PC-3 (cell line): ENCODE measurements at regions of chr12 and their contacts with region 1.

Region 1: DNA sequence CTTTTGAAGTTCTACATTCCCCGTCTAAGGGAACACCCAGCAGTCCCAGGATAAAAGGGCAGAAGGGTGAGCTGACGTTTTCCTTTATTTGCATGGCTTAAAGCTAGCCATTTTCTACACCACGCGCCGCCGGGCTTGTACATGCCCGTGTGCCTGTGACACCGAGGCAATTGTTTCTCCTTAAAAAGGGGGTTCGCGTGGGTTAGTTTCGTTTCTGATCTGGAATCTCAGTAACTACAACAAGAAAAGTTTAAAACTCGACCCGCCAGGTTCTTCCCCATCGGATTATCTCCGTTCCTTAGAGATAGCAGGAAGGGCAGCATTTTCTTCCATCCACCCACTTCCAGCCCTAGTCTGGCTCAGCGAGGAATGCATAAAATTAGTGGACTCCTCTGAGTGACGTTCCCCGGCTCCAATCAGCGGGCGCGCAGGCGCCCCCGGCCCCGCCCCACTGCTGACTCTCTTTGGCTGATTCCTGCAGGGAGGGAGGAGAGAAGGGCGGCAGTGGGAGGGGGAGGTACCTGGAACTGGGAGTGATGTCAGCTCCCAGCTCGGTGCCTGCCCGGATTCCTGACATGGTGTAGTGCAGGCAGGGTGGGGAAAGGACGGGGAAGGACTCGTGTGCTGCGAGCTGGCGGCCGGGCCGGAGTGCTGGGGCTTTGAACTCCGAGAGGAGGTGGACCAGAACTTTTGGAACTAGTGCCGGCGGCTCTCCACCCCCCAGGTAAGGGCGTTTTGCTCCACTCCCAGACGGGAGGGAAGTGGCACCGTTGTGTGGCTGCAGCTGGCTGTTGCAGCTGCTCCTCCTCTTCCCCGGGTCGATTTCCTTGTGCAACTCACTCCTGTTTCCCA is at the start of gene PPFIBP1:
- DNase-seq: peak; percentile 100
- ATAC-seq: peak; percentile 91
- H3K4me3 ChIP-seq: peak within 1 kb of the TSS; percentile 80
- H3K27ac ChIP-seq: peak within 1 kb of the TSS; percentile 72
- H3K4me1 ChIP-seq: peaks cover 17% of the 10 kb centered on the region
- H3K27me3 ChIP-seq: no peaks in the 10 kb centered on the region
- CTCF ChIP-seq: peak; percentile 39
- total RNA-seq, gene PPFIBP1: 56.9 and 57.2 TPM in 2 replicates

Region 2: DNA sequence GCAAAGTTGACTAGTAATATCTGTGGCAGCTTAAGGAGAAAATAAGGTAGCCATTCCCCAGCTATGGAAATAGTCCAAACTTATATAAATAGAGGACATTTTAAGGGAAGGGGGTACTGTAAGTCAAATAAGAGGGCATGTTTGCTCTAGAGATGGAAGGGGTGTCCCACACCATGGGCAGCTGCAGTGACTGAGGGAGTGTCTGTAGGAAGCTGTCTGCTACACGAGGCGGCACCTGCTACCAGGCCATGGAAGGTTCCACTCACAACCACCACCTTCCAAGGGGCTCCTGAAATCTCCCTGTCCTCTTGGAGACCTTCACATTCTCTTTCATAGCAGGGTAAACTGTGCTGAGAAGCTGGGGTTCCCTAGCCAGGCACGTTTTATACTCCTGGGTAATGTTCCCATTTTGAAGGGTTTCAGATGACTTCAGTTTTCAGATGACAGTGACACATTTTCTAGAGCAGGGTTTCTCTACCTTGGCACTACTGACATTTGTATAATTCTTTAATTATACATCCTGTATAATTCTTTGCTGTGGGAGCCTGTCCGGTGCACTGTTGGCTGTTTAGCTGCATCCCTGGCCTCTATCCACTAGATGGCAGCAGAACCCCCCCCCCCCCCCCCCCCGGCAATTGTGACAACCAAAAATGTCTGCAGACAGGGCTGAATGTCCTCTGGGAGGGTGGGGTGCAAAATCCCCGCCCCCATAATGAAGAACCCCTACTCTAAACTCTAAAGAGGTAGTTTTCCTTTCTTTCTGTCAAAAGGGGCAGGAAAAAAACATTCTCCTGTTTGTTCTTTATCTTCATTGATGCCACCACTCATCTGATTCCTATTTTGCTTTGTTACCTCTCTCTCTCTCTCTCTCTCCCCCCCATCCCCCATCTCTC is 88.9 kb before region 1 on chr12:
- CTCF ChIA-PET with region 1: interaction called, 5 read pairs
- POLR2A ChIA-PET with region 1: no interaction called
- intact Hi-C with region 1: loop called (anchors 1 kb)
- DNase-seq: peak; percentile 33
- ATAC-seq: peak; percentile 82
- H3K4me3 ChIP-seq: no peak overlapping the region
- H3K27ac ChIP-seq: no peak overlapping the region
- H3K4me1 ChIP-seq: no peaks in the 10 kb centered on the region
- H3K27me3 ChIP-seq: no peaks in the 10 kb centered on the region
- CTCF ChIP-seq: peak; percentile 72

Region 3: DNA sequence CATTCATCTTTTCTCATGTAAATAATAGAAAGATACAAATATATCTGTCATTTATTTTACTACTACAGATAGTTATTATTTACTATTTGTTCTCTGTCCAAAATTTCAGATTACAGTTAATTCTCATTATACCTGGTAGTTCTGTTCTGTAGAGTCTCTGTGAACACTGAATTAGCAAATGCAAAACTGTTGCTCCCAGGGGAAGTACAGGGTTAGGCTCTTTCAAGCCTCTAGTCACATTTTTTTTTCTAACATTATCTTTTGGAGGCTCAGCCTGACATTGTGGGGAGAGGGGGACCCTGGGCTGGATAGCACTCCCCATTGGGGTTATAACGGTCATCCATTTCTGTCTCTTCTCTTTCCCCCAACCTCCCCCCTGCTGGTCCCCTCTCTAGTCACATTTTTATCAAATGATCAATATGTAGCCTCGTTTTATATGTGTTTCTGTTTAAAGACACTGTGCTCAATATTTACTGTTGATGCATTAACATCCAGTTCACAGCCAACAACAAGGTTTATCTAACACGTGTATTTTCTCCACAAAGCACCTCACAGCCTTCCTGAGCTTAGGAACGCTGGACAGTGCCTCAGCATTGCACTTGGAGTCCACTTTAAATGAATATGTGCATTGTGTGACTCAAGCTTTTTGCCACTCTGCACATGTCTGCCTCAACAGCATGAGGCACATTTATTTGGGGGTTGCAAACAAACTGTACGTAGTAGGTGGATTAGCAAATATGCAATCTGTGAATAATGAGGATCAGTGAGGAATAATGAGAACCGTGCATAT is 72.6 kb before region 1 on chr12:
- CTCF ChIA-PET with region 1: no interaction called
- POLR2A ChIA-PET with region 1: no interaction called
- intact Hi-C with region 1: no loop called
- DNase-seq: no peak
- ATAC-seq: no peak
- H3K4me3 ChIP-seq: no peak overlapping the region
- H3K27ac ChIP-seq: no peak overlapping the region
- H3K4me1 ChIP-seq: no peaks in the 10 kb centered on the region
- H3K27me3 ChIP-seq: no peaks in the 10 kb centered on the region
- CTCF ChIP-seq: no peak

Region 4: DNA sequence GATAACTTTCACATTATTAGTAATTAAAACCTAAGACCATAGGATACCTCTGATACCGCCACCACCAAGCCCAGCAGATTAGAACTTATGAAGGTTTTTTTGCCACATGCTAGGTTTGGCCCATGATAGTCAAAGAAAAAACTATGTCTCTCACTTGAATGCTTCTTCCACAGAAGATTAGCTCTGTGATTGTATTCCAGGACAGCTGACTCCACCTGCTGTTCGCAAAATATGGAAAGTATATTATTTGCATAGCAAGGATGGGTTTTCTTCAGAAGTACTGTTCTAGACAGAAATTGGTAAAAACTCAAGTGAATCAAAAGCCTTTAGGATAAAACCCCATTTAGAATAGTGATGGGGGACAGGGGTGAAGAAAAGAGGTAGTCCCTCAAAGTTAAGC is 42.3 kb after region 1 on chr12:
- CTCF ChIA-PET with region 1: interaction called, 11 read pairs
- POLR2A ChIA-PET with region 1: no interaction called
- intact Hi-C with region 1: loop called (anchors 2 kb)
- DNase-seq: peak; percentile 27
- ATAC-seq: peak; percentile 41
- H3K4me3 ChIP-seq: no peak overlapping the region
- H3K27ac ChIP-seq: no peak overlapping the region
- H3K4me1 ChIP-seq: peaks cover 13% of the 10 kb centered on the region
- H3K27me3 ChIP-seq: no peaks in the 10 kb centered on the region
- CTCF ChIP-seq: peak; percentile 51

Region 5: GRCh38 chr12:27592548-27592947 is 68.7 kb after region 1 on chr12:
- CTCF ChIA-PET with region 1: no interaction called
- POLR2A ChIA-PET with region 1: interaction called, 8 read pairs
- intact Hi-C with region 1: loop called (anchors 1 kb)
- DNase-seq: peak; percentile 93
- ATAC-seq: peak; percentile 89
- H3K4me3 ChIP-seq: no peak overlapping the region
- H3K27ac ChIP-seq: peak overlapping the region; percentile 48
- H3K4me1 ChIP-seq: peaks cover 47% of the 10 kb centered on the region
- H3K27me3 ChIP-seq: no peaks in the 10 kb centered on the region
- CTCF ChIP-seq: no peak

Region 6: GRCh38 chr12:27635349-27635972 is 111.6 kb after region 1 on chr12:
- CTCF ChIA-PET with region 1: no interaction called
- POLR2A ChIA-PET with region 1: interaction called, 4 read pairs
- intact Hi-C with region 1: loop called (anchors 1 kb)
- DNase-seq: peak; percentile 80
- ATAC-seq: peak; percentile 60
- H3K4me3 ChIP-seq: no peak overlapping the region
- H3K27ac ChIP-seq: 0 out of 2 replicates have a peak overlapping the region, but pooled peaks have one; percentile 5
- H3K4me1 ChIP-seq: 0 out of 2 replicates have a peak, but pooled peaks cover 2% of the 10 kb centered on the region
- H3K27me3 ChIP-seq: no peaks in the 10 kb centered on the region
- CTCF ChIP-seq: peak; percentile 84

Region 7: DNA sequence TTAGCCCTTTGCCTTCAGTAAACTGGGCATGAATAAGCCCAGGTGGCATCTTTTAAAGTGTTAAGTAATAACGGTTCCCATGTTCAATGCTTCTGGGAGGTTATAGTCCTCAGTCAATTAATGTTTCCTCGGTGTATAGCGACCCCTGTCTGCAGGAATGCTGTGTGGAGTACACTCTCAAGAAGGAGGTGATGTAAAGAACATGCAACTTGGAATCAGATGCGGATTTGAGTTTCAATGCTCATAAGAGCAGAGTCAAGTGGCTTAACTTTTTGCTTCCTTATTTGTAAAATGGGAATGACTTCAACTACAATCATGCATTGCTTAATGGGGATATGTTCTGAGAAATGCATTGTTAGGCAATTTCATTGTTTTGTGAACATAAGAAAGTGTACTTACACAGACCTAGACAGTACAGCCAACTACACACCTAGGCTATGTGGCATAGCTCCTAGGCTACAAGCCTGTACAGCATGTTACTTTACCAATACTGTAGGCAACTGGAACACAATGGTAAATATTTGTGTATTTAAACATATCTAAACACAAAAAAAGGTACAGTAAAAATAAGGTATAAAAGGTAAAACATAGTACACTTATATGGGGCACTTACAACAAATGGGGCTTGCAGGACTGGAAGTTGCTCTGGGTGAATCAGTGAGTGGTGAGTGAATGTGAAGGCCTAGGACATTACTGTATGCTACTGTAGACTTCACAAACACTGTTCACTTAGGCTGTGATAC is 180.0 kb after region 1 on chr12:
- CTCF ChIA-PET with region 1: no interaction called
- POLR2A ChIA-PET with region 1: no interaction called
- intact Hi-C with region 1: loop called (anchors 10 kb)
- DNase-seq: peak; percentile 98
- ATAC-seq: peak; percentile 99
- H3K4me3 ChIP-seq: no peak overlapping the region
- H3K27ac ChIP-seq: no peak overlapping the region
- H3K4me1 ChIP-seq: no peaks in the 10 kb centered on the region
- H3K27me3 ChIP-seq: no peaks in the 10 kb centered on the region
- CTCF ChIP-seq: peak; percentile 99; the same call in 1 of the 2 replicates

Region 8: GRCh38 chr12:27747111-27747820 is 223.4 kb after region 1 on chr12:
- CTCF ChIA-PET with region 1: no interaction called
- POLR2A ChIA-PET with region 1: no interaction called
- intact Hi-C with region 1: no loop called
- DNase-seq: peak; percentile 85
- ATAC-seq: peak; percentile 86
- H3K4me3 ChIP-seq: peak overlapping the region; percentile 47
- H3K27ac ChIP-seq: peak overlapping the region; percentile 94
- H3K4me1 ChIP-seq: peaks cover 49% of the 10 kb centered on the region
- H3K27me3 ChIP-seq: no peaks in the 10 kb centered on the region
- CTCF ChIP-seq: no peak